ENCODE measurements at regions of chr1 and their contacts with region 1.

Region 1: GRCh38 chr1:8026153-8026975 is at the start of gene ERRFI1:
- DNase-seq: peak; percentile 86 to 92 (median 90)
- H3K4me3 ChIP-seq: peak within 1 kb of the TSS in 4 of 7 experiments; percentile 40 to 62 (median 56)
- H3K27ac ChIP-seq: no peak within 1 kb of the TSS
- H3K4me1 ChIP-seq: peaks cover 4 to 15% (median 14%) of the 10 kb centered on the region in 4 experiments
- H3K27me3 ChIP-seq: peaks cover 19 to 52% (median 28%) of the 10 kb centered on the region in 5 experiments

Region 2: DNA sequence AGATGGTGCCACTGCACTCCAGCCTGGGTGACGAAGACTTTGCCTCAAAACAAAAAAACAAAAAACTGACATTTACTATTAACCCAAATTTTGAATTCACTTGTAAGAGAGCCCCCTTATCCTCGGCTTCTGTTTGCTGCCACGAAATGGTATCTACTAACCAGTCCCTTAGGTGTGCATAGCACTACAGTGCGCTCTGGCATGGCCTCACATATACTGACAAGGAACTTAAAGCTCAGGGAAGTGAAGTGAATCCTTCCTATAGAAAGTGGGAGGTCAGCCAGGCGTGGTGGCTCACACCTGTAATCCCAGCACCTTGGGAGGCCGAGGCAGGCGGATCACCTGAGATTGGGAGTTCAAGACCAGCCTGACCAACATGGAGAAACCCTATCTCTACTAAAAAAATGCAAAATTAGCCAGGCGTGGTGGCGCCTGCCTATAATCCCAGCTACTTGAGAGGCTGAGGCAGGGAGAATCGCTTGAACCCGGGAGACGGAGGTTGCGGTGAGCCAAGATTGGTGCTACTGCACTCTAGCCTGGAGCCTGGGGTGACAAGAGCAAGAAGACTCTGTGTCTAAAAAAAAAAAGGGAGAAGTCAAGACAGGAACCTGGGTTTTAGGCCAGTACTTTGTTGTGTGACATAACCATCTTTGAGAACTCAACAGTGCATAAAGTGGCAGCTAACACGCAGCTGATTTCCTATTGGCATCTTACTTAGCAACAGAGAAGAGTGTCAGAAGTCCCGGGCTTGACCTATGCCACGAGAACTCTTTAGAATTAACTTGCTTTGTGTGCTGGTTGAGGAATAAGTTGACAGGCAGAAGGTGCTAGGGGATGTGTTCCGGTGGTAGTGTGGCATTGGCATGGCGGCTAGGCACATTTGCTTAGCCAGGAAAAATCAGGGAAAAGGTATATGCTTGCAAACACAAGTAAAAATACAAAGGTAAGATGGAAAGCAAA is 17.0 kb before region 1 on chr1:
- CTCF ChIA-PET with region 1: no interaction called
- POLR2A ChIA-PET with region 1: no interaction called
- DNase-seq: no peak
- H3K4me3 ChIP-seq: no peak overlapping the region
- H3K27ac ChIP-seq: no peak overlapping the region
- H3K4me1 ChIP-seq: no peaks in the 10 kb centered on the region
- H3K27me3 ChIP-seq: no peaks in the 10 kb centered on the region

Region 3: GRCh38 chr1:8055973-8056372 is 29.6 kb after region 1 on chr1:
- CTCF ChIA-PET with region 1: no interaction called
- POLR2A ChIA-PET with region 1: no interaction called
- DNase-seq: no peak
- H3K4me3 ChIP-seq: no peak overlapping the region
- H3K27ac ChIP-seq: no peak overlapping the region
- H3K4me1 ChIP-seq: no peaks in the 10 kb centered on the region
- H3K27me3 ChIP-seq: peaks cover 0 to 3% (median 2%) of the 10 kb centered on the region in 5 experiments

Region 4: GRCh38 chr1:8122488-8123407 is 96.4 kb after region 1 on chr1:
- CTCF ChIA-PET with region 1: no interaction called
- POLR2A ChIA-PET with region 1: no interaction called
- DNase-seq: peak in 1 of 3 donors; percentile 19
- H3K4me3 ChIP-seq: no peak overlapping the region
- H3K27ac ChIP-seq: no peak overlapping the region
- H3K4me1 ChIP-seq: peaks cover 0 to 7% (median 1%) of the 10 kb centered on the region in 4 experiments
- H3K27me3 ChIP-seq: peaks cover 0 to 31% (median 10%) of the 10 kb centered on the region in 5 experiments

Region 5: DNA sequence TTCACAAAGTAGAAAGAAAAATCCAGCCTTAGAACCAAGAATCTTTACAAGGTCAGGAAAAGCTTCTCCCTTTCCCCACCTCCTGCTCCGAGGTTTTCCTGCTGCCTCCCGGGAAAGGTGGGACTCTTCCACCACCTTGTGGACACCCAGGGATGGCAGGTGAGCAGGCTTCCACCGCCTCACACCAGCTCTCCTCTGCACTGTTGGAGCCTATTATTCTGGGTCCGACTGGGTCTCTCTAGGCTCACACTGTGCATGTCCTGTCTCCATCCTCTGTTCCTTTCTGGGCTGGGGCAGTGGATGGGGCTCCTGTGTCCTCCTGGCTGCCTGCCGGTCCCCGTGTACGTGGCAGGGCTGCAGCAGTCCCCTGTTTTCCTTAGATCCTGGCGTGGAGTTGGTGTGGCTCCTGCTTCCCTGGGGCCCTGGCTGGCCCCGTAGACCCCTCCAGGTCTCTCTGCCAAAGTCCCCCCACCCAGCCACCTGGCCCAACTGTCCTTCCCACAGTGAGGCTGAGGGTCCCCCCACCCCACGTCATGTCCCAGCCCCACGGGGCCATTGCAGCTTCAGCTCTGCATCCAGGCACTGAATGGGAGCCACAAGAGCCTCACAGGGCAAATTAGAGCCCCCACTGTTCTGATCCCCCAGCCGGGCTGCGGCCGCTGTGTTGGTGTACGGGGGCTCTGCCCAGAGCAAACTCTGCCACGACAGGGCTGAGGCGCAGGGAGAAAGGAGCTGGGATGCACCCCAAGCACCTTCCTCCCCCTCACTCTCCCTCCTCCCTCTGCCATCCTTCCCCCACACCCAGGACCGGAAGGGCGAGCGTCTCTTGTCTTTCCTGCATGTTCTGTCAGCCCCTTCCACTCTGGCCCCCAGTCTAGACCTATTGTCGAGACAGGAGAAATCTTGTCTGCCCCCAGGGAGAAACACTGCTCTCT is 288.2 kb after region 1 on chr1:
- CTCF ChIA-PET with region 1: interaction called, 54 read pairs
- POLR2A ChIA-PET with region 1: interaction called, 3 read pairs
- DNase-seq: peak in 2 of 3 donors; percentile 34 to 36
- H3K4me3 ChIP-seq: no peak overlapping the region
- H3K27ac ChIP-seq: no peak overlapping the region
- H3K4me1 ChIP-seq: peaks cover 0 to 15% (median 10%) of the 10 kb centered on the region in 4 experiments
- H3K27me3 ChIP-seq: peaks cover 0 to 53% (median 16%) of the 10 kb centered on the region in 5 experiments

Measured in common myeloid progenitor, CD34-positive (primary cell).